ENCODE measurements at regions of chr3 and their contacts with region 1.

Region 1: GRCh38 chr3:136332776-136333175 is 82.6 kb downstream of the PCCB start:
- DNase-seq: no peak
- ATAC-seq: no peak
- H3K4me3 ChIP-seq: no peak overlapping the region
- H3K4me3 Mint-ChIP-seq: no peak overlapping the region
- H3K27ac ChIP-seq: no peak overlapping the region
- H3K27ac Mint-ChIP-seq: no peak overlapping the region
- H3K4me1 ChIP-seq: no peaks in the 10 kb centered on the region
- H3K4me1 Mint-ChIP-seq: peaks cover 0 to 3% (median 0%) of the 10 kb centered on the region in 3 donors
- H3K27me3 ChIP-seq: no peaks in the 10 kb centered on the region
- H3K27me3 Mint-ChIP-seq: no peaks in the 10 kb centered on the region

Region 2: GRCh38 chr3:135106445-135106844 is 1226.3 kb before region 1 on chr3:
- CTCF ChIA-PET with region 1: no interaction called
- POLR2A ChIA-PET with region 1: no interaction called
- DNase-seq: no peak
- ATAC-seq: no peak
- H3K4me3 ChIP-seq: no peak overlapping the region
- H3K4me3 Mint-ChIP-seq: no peak overlapping the region
- H3K27ac ChIP-seq: no peak overlapping the region
- H3K27ac Mint-ChIP-seq: no peak overlapping the region
- H3K4me1 ChIP-seq: no peaks in the 10 kb centered on the region
- H3K4me1 Mint-ChIP-seq: no peaks in the 10 kb centered on the region
- H3K27me3 ChIP-seq: no peaks in the 10 kb centered on the region
- H3K27me3 Mint-ChIP-seq: peaks cover 0 to 7% of the 10 kb centered on the region in 2 donors

Region 3: DNA sequence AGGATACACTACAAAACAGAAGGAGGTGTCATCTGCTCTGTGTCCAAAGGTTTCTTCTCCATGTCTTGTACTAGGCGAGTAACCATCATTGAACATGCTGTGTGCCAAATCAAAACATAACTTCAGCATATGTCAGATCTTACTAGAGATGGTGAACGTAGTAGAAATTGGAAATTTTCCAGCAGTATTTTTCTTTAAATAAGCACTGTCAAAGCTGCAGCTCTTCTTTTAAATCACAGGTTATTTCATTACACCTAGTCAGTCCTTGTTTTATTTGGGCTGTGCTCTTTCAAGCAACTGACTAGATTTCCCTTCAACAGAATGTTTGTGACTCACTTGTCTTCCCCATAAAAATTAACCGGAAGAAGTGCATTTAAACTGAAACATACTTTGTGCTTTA is 183.1 kb before region 1 on chr3:
- CTCF ChIA-PET with region 1: no interaction called
- POLR2A ChIA-PET with region 1: interaction called in 1 of 2 experiments, 13 read pairs
- DNase-seq: no peak
- ATAC-seq: no peak
- H3K4me3 ChIP-seq: no peak overlapping the region
- H3K4me3 Mint-ChIP-seq: no peak overlapping the region
- H3K27ac ChIP-seq: no peak overlapping the region
- H3K27ac Mint-ChIP-seq: peak overlapping the region; percentile 56 to 71
- H3K4me1 ChIP-seq: peaks cover 5 to 16% of the 10 kb centered on the region in 2 experiments
- H3K4me1 Mint-ChIP-seq: peaks cover 64 to 71% (median 67%) of the 10 kb centered on the region in 3 donors
- H3K27me3 ChIP-seq: no peaks in the 10 kb centered on the region
- H3K27me3 Mint-ChIP-seq: no peaks in the 10 kb centered on the region

Region 4: DNA sequence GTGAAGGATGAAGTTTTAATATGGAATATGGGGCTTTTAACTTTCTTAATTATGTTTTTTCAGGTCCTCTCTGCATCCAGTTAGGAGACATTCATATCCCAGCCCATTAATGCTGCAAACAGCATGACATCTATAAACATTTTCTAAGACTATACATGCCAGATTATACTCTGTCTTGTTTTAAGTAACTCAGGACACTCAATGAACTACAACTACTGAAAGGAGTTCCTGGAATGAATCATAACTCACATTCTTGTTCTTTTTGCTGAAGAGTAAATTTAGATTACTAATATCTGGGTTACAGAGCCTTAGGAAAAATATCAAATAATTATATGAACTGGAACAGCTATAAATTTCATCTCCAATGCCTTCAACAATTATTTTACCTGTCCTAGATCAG is 252.0 kb after region 1 on chr3:
- CTCF ChIA-PET with region 1: interaction called in 1 of 2 experiments, 10 read pairs
- POLR2A ChIA-PET with region 1: no interaction called
- DNase-seq: no peak
- ATAC-seq: no peak
- H3K4me3 ChIP-seq: no peak overlapping the region
- H3K4me3 Mint-ChIP-seq: no peak overlapping the region
- H3K27ac ChIP-seq: no peak overlapping the region
- H3K27ac Mint-ChIP-seq: no peak overlapping the region
- H3K4me1 ChIP-seq: no peaks in the 10 kb centered on the region
- H3K4me1 Mint-ChIP-seq: peaks cover 2 to 4% (median 4%) of the 10 kb centered on the region in 3 donors
- H3K27me3 ChIP-seq: no peaks in the 10 kb centered on the region
- H3K27me3 Mint-ChIP-seq: no peaks in the 10 kb centered on the region